ENCODE measurements at regions of chr2 and their contacts with region 1.

Region 1: DNA sequence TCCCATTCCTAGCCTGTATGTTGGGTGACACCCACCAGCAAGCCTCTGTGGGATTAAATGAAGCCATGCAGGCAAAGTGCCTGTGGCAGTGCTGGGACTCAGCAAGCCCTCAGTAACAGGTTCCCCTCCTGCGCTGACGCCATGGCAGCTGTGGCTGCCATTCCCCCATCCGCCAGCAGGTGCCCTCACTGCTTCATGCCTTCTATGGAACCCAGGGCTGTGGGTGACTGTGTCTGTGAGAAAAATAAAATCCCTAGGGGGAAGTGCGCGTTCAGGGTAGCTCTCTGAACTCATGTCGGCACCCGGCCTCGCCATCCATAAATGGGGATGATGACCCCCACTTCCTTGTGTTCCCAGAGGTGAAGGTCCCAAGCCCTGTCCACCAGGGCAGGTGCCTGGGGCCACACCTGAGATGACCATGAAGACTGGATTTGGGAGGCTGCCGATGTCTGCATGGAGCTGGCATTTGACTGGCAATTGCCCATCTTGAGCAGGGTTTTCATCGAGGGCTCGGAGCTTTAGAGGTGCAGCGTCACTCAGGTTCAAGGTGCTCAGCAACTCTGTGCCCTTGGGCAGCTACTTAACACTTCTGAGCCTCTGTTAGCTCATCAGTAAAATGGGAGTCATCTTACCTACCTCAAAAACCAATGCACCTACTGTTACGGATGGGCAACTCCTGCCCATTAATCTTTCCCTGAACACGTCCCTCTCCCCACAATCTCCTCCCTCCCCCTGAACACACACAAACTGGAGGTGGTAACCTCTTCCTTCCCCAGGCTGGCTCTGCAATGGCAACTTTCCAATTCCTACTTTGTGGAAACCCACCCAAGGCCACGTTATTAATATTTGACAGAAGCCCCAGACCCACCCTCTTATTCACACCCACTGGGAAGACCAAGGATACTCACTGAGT is 2.9 kb upstream of the MAL start:
- DNase-seq: peak; percentile 69 to 90 (median 83)
- ATAC-seq: peak; percentile 78
- H3K4me3 ChIP-seq: peak overlapping the region; percentile 39
- H3K4me3 Mint-ChIP-seq: peak overlapping the region; percentile 77 to 100 (median 86)
- H3K27ac ChIP-seq: peak overlapping the region; percentile 49
- H3K27ac Mint-ChIP-seq: peak overlapping the region; percentile 81 to 100 (median 95)
- H3K4me1 ChIP-seq: peaks cover 9 to 26% of the 10 kb centered on the region in 2 donors
- H3K4me1 Mint-ChIP-seq: peaks cover 23 to 66% (median 60%) of the 10 kb centered on the region in 7 donors
- H3K27me3 ChIP-seq: no peaks in the 10 kb centered on the region
- H3K27me3 Mint-ChIP-seq: peaks cover 0 to 14% (median 0%) of the 10 kb centered on the region in 5 donors

Region 2: GRCh38 chr2:95008306-95008705 is 14.3 kb before region 1 on chr2:
- CTCF ChIA-PET with region 1: no interaction called
- POLR2A ChIA-PET with region 1: no interaction called
- intact Hi-C with region 1: no loop called
- DNase-seq: no peak
- ATAC-seq: no peak
- H3K4me3 ChIP-seq: no peak overlapping the region
- H3K4me3 Mint-ChIP-seq: no peak overlapping the region
- H3K27ac ChIP-seq: no peak overlapping the region
- H3K27ac Mint-ChIP-seq: peak overlapping the region in 1 of 9 donors; percentile 36
- H3K4me1 ChIP-seq: no peaks in the 10 kb centered on the region
- H3K4me1 Mint-ChIP-seq: peaks cover 0 to 4% (median 2%) of the 10 kb centered on the region in 7 donors
- H3K27me3 ChIP-seq: no peaks in the 10 kb centered on the region
- H3K27me3 Mint-ChIP-seq: peaks cover 0 to 9% (median 6%) of the 10 kb centered on the region in 5 donors

Region 3: DNA sequence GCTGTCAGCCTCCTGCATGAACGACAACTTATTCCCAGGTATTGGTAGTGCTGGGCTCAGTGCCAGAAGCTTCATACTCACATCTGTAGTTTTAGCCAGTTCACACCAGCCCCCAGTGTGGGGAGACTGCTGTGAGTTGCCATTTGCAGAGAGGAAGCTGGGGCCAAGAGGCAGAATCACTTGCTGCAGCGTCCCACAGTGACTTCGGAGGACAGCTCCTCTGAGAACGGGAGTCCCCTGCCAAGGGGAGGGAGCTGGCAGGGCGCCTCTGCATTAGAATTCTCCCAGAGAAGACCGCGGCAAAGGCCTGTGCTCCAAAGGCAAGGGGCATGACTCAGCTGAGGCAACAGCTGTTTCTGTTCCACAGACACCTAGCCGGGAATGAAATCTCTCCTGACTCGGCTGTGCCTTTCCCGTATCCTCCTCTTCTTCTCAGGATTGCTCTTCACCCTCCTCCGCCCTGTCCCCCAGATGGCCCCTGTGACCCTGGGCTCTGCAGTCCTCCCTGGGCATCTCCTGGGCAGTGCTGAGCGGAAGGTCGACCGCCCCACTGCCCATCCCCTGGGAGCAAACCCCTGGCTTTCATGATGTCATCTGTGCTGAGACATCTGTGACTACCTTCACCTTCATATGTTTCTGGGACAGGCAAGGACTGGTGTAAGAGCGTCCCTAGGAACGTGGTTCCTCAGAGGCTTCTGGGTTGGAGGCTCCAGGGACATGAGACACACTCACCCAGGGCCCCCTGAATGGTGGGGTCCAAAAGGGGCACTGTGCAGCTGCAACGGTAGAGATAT is 20.9 kb after region 1 on chr2:
- CTCF ChIA-PET with region 1: interaction called, 9 read pairs
- POLR2A ChIA-PET with region 1: interaction called, 380 read pairs
- intact Hi-C with region 1: loop called (anchors 1 to 2 kb)
- DNase-seq: peak in 3 of 9 donors; percentile 35 to 45 (median 39)
- ATAC-seq: peak; percentile 37
- H3K4me3 ChIP-seq: no peak overlapping the region
- H3K4me3 Mint-ChIP-seq: peak overlapping the region in 7 of 10 donors; percentile 9 to 68 (median 41)
- H3K27ac ChIP-seq: peak overlapping the region; percentile 49
- H3K27ac Mint-ChIP-seq: peak overlapping the region; percentile 49 to 98 (median 67)
- H3K4me1 ChIP-seq: peaks cover 0 to 62% of the 10 kb centered on the region in 2 donors
- H3K4me1 Mint-ChIP-seq: peaks cover 26 to 99% (median 86%) of the 10 kb centered on the region in 7 donors
- H3K27me3 ChIP-seq: no peaks in the 10 kb centered on the region
- H3K27me3 Mint-ChIP-seq: no peaks in the 10 kb centered on the region

Region 4: DNA sequence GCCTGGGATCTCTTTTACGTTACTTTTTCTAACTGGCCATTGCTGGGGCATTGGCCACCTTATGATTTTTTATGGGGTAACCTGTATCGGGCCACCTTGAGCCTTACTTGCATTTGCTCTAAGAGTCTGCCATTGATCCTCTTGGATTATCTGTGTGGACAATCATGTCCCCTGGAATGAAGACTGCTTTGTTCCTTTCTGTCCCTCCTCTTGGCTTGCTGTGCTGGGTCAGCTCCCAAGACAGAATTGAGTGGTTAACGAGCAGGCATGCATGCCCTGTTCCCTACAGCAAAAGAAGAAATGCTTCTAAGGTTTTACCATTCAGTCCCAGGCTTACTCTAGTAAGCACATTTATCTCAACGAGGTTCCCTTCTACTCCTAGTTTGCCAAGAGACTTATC is 49.3 kb after region 1 on chr2:
- CTCF ChIA-PET with region 1: interaction called, 502 read pairs
- POLR2A ChIA-PET with region 1: interaction called, 1,031 read pairs
- intact Hi-C with region 1: loop called (anchors 1 kb)
- DNase-seq: no peak
- ATAC-seq: no peak
- H3K4me3 ChIP-seq: no peak overlapping the region
- H3K4me3 Mint-ChIP-seq: peak overlapping the region in 2 of 10 donors; percentile 9 to 96
- H3K27ac ChIP-seq: no peak overlapping the region
- H3K27ac Mint-ChIP-seq: peak overlapping the region in 8 of 9 donors; percentile 20 to 99 (median 98)
- H3K4me1 ChIP-seq: peaks cover 22 to 45% of the 10 kb centered on the region in 2 donors
- H3K4me1 Mint-ChIP-seq: peaks cover 7 to 61% (median 54%) of the 10 kb centered on the region in 7 donors
- H3K27me3 ChIP-seq: no peaks in the 10 kb centered on the region
- H3K27me3 Mint-ChIP-seq: no peaks in the 10 kb centered on the region

Region 5: DNA sequence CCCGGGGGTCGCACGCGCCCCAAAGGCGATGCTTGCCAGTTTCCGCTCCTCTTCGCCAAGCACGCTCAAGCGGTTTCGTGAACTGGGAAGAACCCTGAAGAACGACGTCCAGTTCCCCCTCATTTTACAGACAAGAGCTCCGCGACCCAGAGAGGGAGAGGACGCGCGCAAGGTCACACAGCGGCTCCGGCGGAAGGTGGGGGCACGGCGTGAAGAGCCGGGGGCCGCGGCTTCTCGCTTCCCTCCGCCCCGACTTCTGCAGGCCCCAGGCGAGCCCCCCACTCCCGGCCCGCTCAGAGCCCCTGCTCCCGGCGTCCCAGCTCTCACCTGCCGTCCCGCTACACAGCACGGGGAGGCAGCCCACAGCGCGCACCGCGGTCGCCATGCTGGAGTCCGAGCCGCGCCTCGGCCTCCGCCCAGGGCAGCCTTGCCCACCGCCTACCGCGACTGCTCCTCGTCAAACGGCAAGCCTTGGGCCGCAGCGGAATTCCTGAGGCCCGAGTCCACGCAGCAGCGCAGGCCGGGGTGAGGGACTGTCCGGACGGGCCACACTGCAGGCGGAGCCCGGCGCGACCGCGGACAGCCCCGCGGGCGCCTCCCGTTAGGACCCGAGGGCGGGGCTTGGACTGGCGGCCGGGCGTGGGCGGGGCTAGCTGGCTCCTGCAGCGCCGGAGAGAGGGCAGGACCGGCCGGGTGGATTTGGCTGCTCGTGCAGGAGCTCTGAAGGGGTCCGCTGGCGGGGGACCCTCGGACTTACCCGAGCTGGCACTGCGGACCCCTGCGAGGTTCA is 99.0 kb after region 1 on chr2 and contains the start of gene MRPS5:
- CTCF ChIA-PET with region 1: interaction called, 116 read pairs
- POLR2A ChIA-PET with region 1: interaction called, 137 read pairs
- intact Hi-C with region 1: loop called in 1 of 2 experiments (anchors 1 kb)
- DNase-seq: peak; percentile 63 to 95 (median 72)
- ATAC-seq: peak; percentile 98
- H3K4me3 ChIP-seq: peak within 1 kb of the TSS; percentile 74
- H3K4me3 Mint-ChIP-seq: peak within 1 kb of the TSS; percentile 91 to 99 (median 96)
- H3K27ac ChIP-seq: peak within 1 kb of the TSS; percentile 91
- H3K27ac Mint-ChIP-seq: peak within 1 kb of the TSS; percentile 92 to 97 (median 94)
- H3K4me1 ChIP-seq: peaks cover 19 to 27% of the 10 kb centered on the region in 2 donors
- H3K4me1 Mint-ChIP-seq: peaks cover 38 to 58% (median 52%) of the 10 kb centered on the region in 7 donors
- H3K27me3 ChIP-seq: no peaks in the 10 kb centered on the region
- H3K27me3 Mint-ChIP-seq: no peaks in the 10 kb centered on the region
- total RNA-seq, gene MRPS5: 26.3 to 72.9 (median 60.5) TPM

Region 6: GRCh38 chr2:95314964-95315611 is 292.5 kb after region 1 on chr2:
- CTCF ChIA-PET with region 1: no interaction called
- POLR2A ChIA-PET with region 1: no interaction called
- intact Hi-C with region 1: loop called in 1 of 2 experiments (anchors 2 kb)
- DNase-seq: no peak
- ATAC-seq: no peak
- H3K4me3 ChIP-seq: no peak overlapping the region
- H3K4me3 Mint-ChIP-seq: no peak overlapping the region
- H3K27ac ChIP-seq: no peak overlapping the region
- H3K27ac Mint-ChIP-seq: peak overlapping the region in 1 of 9 donors; percentile 24
- H3K4me1 ChIP-seq: no peaks in the 10 kb centered on the region
- H3K4me1 Mint-ChIP-seq: peaks cover 0 to 5% (median 0%) of the 10 kb centered on the region in 7 donors
- H3K27me3 ChIP-seq: no peaks in the 10 kb centered on the region
- H3K27me3 Mint-ChIP-seq: peaks cover 0 to 7% (median 0%) of the 10 kb centered on the region in 5 donors

Region 7: GRCh38 chr2:96407041-96407918 is 1384.7 kb after region 1 on chr2:
- CTCF ChIA-PET with region 1: no interaction called
- POLR2A ChIA-PET with region 1: no interaction called
- intact Hi-C with region 1: no loop called
- DNase-seq: peak; percentile 48 to 92 (median 88)
- ATAC-seq: peak; percentile 94
- H3K4me3 ChIP-seq: peak overlapping the region; percentile 49
- H3K4me3 Mint-ChIP-seq: peak overlapping the region; percentile 67 to 91 (median 83)
- H3K27ac ChIP-seq: peak overlapping the region; percentile 33
- H3K27ac Mint-ChIP-seq: peak overlapping the region; percentile 89 to 100 (median 96)
- H3K4me1 ChIP-seq: peaks cover 19 to 31% of the 10 kb centered on the region in 2 donors
- H3K4me1 Mint-ChIP-seq: peaks cover 18 to 51% (median 36%) of the 10 kb centered on the region in 7 donors
- H3K27me3 ChIP-seq: no peaks in the 10 kb centered on the region
- H3K27me3 Mint-ChIP-seq: no peaks in the 10 kb centered on the region